ENCODE measurements at regions of chr2 and their contacts with region 1.

Region 1: DNA sequence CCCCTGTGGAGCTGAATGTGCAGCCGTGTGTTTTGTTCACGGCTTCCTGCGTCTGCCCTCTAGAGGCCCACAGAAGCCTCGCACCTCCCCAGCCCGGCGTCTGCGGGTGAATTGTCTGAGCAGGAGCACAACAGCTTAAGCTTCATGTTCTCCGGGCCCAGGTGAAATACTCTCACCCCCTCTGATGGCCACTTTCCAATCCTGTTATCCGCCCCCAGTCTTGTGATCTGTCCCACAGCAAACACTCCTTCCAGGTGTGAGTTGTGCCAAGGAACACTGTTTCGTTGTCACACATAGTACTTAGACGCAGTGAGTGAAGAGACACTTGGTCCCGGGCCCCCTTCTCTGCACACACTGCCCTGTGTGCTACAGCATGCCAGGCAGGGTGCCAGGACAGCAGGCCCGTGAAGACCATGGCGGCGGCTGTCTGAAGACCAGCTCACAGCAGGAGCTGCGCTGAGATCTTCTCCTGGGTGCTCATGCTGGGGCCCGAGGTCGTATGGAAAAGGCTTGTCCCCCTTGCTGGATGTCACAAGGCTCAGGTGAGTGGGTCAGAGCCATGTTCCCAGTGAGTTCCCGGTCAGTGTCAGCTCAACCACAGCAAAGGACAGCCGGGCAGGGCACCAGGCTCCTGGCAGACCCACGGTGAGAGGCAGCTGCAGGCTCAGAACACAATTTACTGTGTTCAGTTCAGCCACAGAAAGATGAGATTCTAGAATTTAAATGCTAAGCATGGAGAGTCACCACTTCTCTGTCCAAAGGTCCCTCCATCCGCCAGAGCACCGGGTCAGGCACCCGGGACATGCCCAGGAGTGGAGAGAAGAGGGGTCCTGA is 6.8 kb upstream of the PXDN start:
- DNase-seq: peak; percentile 65
- H3K4me3 ChIP-seq: no peak overlapping the region
- H3K27ac ChIP-seq: no peak overlapping the region
- H3K4me1 ChIP-seq: peaks cover 0 to 2% (median 0%) of the 10 kb centered on the region in 4 donors
- H3K27me3 ChIP-seq: no peaks in the 10 kb centered on the region
- CTCF ChIP-seq: peak; percentile 73 to 84 (median 75)
- EP300 ChIP-seq: no peak
- POLR2A ChIP-seq: no peak

Region 2: DNA sequence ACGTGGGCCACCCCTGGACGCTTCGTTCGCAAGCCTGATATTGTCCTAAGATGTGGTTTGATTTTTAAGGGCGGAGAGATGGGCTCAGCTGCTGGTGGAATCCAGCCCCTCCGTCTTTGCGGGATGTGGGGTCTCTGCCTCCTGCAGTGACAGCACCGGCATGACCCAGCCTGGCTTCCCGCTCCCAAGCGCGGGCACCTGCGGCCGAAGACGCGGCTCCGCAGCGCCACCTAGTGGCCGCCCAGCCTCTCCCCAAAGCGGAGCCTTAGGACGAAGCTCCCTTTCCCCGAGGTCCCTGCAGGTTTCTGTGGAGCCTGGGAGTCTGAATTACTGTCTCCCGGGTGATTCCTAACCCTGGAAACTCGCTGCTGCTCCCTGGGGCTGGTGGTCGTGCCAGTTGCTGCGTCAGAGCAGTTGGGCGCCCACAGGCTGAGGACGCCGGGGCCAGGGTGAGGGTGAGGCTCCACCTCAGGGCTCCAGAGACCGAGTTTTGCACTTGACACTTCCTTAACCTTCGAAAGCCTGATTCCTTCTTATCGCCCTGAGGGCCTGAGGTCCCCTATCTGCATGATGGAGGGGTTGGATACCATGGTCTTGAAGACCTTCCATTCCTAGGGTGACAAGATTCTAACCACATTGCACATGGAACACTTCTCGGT is 200.4 kb before region 1 on chr2:
- in situ Hi-C with region 1: no loop called
- intact Hi-C with region 1: loop called (anchors 1 kb)
- DNase-seq: peak; percentile 55
- H3K4me3 ChIP-seq: no peak overlapping the region
- H3K27ac ChIP-seq: no peak overlapping the region
- H3K4me1 ChIP-seq: peaks cover 0 to 5% (median 3%) of the 10 kb centered on the region in 4 donors
- H3K27me3 ChIP-seq: no peaks in the 10 kb centered on the region
- CTCF ChIP-seq: peak; percentile 79 to 98 (median 96)
- EP300 ChIP-seq: no peak
- POLR2A ChIP-seq: no peak

Region 3: GRCh38 chr2:1591978-1592907 is 158.9 kb before region 1 on chr2:
- in situ Hi-C with region 1: loop called (anchors 10 to 25 kb)
- intact Hi-C with region 1: loop called (anchors 5 kb)
- DNase-seq: peak; percentile 84
- H3K4me3 ChIP-seq: no peak overlapping the region
- H3K27ac ChIP-seq: peak overlapping the region in 3 of 4 donors; percentile 5 to 39 (median 23)
- H3K4me1 ChIP-seq: peaks cover 0 to 15% (median 9%) of the 10 kb centered on the region in 4 donors
- H3K27me3 ChIP-seq: no peaks in the 10 kb centered on the region
- CTCF ChIP-seq: peak; percentile 60 to 90 (median 72)
- EP300 ChIP-seq: no peak
- POLR2A ChIP-seq: no peak

Region 4: DNA sequence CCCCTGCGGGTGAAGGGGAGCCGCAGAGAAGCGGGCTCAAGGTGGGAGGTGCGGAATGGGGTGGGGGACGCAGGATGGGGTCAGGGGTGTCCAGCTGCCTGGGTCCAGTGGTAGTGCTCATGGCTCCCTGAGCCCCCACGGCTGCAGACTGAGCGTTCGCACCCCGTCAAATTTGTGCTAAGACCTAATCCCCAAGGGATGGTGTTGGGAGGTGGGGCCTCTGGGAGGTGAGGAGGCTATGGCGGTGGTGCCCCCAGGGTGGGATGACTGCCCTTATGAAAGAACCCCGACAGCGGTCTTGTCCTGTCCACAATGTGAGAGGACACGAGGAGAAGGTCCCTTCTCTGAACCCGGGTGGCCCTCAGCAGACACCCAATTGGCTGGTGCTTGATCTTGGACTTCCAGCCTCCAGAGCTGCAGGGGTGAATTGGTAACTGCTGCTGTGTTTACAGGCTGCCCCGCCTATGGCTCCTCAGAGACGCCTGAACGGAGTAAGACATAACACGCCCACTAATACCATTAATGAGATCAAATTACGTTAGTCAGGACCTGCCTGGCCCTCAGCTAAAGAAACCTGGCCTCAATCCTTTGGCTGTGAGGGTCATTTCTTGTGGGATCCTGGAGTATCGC is 49.5 kb before region 1 on chr2:
- in situ Hi-C with region 1: no loop called
- intact Hi-C with region 1: no loop called
- DNase-seq: no peak
- H3K4me3 ChIP-seq: no peak overlapping the region
- H3K27ac ChIP-seq: no peak overlapping the region
- H3K4me1 ChIP-seq: peaks cover 0 to 9% (median 4%) of the 10 kb centered on the region in 4 donors
- H3K27me3 ChIP-seq: no peaks in the 10 kb centered on the region
- CTCF ChIP-seq: no peak
- EP300 ChIP-seq: no peak
- POLR2A ChIP-seq: no peak

Region 5: GRCh38 chr2:1817256-1818051 is 66.3 kb after region 1 on chr2:
- in situ Hi-C with region 1: loop called in 1 of 4 experiments (anchors 10 kb)
- intact Hi-C with region 1: loop called (anchors 10 kb)
- DNase-seq: peak; percentile 79
- H3K4me3 ChIP-seq: no peak overlapping the region
- H3K27ac ChIP-seq: peak overlapping the region; percentile 80 to 93 (median 86)
- H3K4me1 ChIP-seq: peaks cover 5 to 17% (median 8%) of the 10 kb centered on the region in 4 donors
- H3K27me3 ChIP-seq: no peaks in the 10 kb centered on the region
- CTCF ChIP-seq: peak; percentile 81 to 97 (median 95)
- EP300 ChIP-seq: peak; percentile 84
- POLR2A ChIP-seq: no peak

Region 6: DNA sequence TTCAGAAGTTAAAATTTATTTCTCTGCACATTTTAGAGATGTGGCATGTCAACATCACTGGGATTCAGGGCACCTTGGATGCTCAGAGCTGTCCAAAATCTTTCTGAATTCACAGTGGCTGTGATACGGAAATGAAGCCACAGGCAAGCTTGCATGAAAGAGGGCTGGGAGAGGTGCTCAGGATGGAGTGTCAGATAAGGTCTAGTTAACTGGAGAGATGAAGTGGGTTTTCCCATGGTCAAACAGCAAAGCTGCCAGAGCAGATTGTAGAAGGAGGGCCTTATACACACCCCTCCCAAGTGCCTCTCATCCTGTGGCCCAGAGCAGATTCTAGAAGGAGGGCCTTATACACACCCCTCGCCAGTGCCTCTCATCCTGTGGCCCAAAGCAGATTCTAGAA is 280.0 kb after region 1 on chr2:
- in situ Hi-C with region 1: no loop called
- intact Hi-C with region 1: no loop called
- DNase-seq: no peak
- H3K4me3 ChIP-seq: no peak overlapping the region
- H3K27ac ChIP-seq: no peak overlapping the region
- H3K4me1 ChIP-seq: no peaks in the 10 kb centered on the region
- H3K27me3 ChIP-seq: no peaks in the 10 kb centered on the region
- CTCF ChIP-seq: no peak
- EP300 ChIP-seq: no peak
- POLR2A ChIP-seq: no peak